ENCODE measurements at regions of chr18 and their contacts with region 1.

Region 1: GRCh38 chr18:21740724-21741510 is at the start of gene MIB1:
- DNase-seq: peak; percentile 99
- ATAC-seq: peak; percentile 72
- H3K4me3 Mint-ChIP-seq: peak within 1 kb of the TSS; percentile 92
- H3K27ac Mint-ChIP-seq: peak within 1 kb of the TSS; percentile 95
- H3K4me1 Mint-ChIP-seq: peaks cover 33% of the 10 kb centered on the region
- H3K27me3 Mint-ChIP-seq: peaks cover 10% of the 10 kb centered on the region
- total RNA-seq, gene MIB1: 34.4 to 40.8 TPM

Region 2: DNA sequence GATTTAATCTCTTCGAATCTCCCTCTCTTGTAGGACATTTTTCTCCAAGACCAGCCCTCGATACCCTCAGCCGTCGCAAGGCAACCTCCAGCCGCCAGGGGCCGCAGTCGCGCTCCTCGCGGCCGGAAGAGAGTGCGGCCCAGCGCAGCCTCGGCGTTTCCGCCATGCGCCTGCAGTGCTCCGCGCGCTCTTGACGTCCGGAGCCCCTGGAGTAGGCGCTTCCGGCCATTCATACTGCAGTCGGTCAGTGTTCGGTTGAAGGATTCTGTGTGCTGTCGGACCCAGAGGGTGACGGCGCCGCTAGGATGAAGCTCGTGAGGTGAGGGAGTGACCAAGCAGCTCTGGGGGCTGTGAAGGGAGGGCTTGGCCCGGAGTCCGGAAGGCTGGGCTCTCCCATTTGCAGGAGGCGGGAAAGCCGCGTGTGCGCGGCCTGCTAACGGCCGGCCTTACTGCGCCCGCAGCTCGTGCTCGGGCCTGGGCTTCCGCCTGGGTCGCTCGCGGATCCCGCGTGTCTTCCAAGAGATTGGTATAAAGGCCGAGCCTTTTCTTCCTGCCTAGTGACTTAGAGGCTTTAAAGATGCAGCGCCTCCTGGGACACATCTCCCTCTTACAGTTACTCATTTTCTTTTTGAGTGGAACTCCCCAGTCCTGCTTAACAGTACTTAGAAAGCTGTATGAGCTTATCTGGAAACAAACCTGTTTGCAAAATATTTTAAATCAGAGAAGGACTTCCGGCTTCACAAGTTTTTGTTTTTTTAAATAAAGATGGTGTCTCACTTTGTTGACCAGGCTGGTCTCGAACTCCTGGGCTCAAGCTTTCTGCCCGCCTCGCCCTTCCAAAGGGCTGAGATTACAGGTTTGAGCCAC is 128.6 kb before region 1 on chr18 and contains the start of gene SNRPD1:
- POLR2A ChIA-PET with region 1: interaction called, 15 read pairs
- DNase-seq: peak; percentile 96
- ATAC-seq: peak; percentile 97
- H3K4me3 Mint-ChIP-seq: peak within 1 kb of the TSS; percentile 100
- H3K27ac Mint-ChIP-seq: peak within 1 kb of the TSS; percentile 100
- H3K4me1 Mint-ChIP-seq: peaks cover 25% of the 10 kb centered on the region
- H3K27me3 Mint-ChIP-seq: no peaks in the 10 kb centered on the region
- total RNA-seq, gene SNRPD1: 74.6 to 75.1 TPM

Region 3: GRCh38 chr18:21786526-21786925 is 45.6 kb after region 1 on chr18:
- POLR2A ChIA-PET with region 1: no interaction called
- DNase-seq: no peak
- ATAC-seq: no peak
- H3K4me3 Mint-ChIP-seq: no peak overlapping the region
- H3K27ac Mint-ChIP-seq: no peak overlapping the region
- H3K4me1 Mint-ChIP-seq: no peaks in the 10 kb centered on the region
- H3K27me3 Mint-ChIP-seq: no peaks in the 10 kb centered on the region